Ascending aorta (tissue), 2 donors: ENCODE measurements at regions of chr7 and their contacts with region 1.

Region 1: GRCh38 chr7:70104243-70104642 is 506.0 kb downstream of the AUTS2 start:
- DNase-seq: no peak
- H3K4me3 ChIP-seq: no peak overlapping the region
- H3K27ac ChIP-seq: no peak overlapping the region
- H3K4me1 ChIP-seq: peaks cover 0 to 8% of the 10 kb centered on the region in 2 donors
- H3K27me3 ChIP-seq: no peaks in the 10 kb centered on the region
- CTCF ChIP-seq: no peak

Region 2: DNA sequence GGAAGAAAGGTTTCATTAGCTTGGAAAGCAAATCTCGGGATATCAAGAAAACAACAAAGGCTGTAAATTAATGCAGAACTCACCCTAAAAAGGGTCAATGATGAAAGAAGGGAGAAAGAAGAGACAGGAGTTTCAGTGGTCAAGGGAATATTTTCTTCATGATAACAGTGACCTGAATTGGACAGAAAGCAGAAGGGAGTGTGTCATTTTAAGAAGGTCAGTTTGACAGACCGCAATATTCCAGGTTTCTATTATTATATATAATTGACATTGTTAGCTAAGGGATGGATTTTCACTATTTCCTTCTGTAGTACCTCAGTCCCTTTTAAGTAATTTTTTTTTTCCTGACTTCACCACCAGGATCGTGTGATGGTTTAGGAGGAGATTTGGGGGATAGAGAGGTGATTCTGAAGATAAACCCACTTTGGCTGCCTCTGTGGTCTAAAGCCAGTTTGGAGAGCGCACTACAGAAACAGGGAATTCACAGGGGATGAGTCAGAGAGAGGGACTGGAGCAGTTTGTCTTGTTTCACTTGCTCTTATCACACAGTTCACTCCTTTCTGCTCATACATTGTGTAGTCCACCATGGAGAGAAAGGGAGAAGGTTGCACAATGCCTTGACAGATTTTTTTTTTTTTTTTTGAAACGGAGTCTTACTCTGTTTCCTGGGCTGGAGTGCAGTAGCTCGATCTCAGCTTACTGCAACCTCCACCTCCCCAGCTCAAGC is 88.0 kb before region 1 on chr7:
- intact Hi-C with region 1: no loop called
- DNase-seq: no peak
- H3K4me3 ChIP-seq: no peak overlapping the region
- H3K27ac ChIP-seq: no peak overlapping the region
- H3K4me1 ChIP-seq: no peaks in the 10 kb centered on the region
- H3K27me3 ChIP-seq: no peaks in the 10 kb centered on the region
- CTCF ChIP-seq: no peak

Region 3: GRCh38 chr7:70165477-70166170 is 61.4 kb after region 1 on chr7:
- intact Hi-C with region 1: loop called (anchors 10 kb)
- DNase-seq: no peak
- H3K4me3 ChIP-seq: no peak overlapping the region
- H3K27ac ChIP-seq: no peak overlapping the region
- H3K4me1 ChIP-seq: no peaks in the 10 kb centered on the region
- H3K27me3 ChIP-seq: no peaks in the 10 kb centered on the region
- CTCF ChIP-seq: no peak

Region 4: GRCh38 chr7:70215491-70215890 is 111.2 kb after region 1 on chr7:
- intact Hi-C with region 1: no loop called
- DNase-seq: no peak
- H3K4me3 ChIP-seq: no peak overlapping the region
- H3K27ac ChIP-seq: no peak overlapping the region
- H3K4me1 ChIP-seq: no peaks in the 10 kb centered on the region
- H3K27me3 ChIP-seq: no peaks in the 10 kb centered on the region
- CTCF ChIP-seq: no peak